ENCODE measurements at regions of chr11 and their contacts with region 1.

Region 1: DNA sequence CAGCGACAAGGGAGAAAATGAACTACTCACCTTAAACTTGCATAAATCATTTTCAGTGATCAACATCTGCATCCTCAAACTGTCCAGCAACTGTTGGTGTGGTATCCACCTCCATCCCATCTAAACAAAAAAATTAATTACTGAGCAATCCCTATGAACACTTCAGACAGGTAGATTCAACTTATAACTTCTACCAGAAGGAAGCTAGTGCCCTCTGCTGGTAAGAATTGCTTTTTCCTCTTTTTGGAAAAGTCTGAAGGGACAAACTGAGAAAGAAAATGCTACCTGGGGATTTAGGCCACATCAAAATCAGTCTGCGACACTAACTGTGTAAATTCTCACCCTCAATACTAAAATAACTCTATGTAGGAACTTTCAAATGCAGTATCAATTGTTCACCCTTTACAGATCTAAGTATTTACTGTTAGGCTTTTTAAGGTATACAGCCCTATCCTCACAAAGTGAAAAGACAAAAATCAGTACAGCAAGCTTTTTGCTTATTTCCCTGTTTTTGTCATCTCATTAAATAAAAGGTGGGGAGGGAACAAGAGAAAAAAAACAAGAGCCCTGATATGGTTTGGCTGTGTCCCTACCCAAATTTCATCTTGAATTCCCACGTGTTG is 17.9 kb downstream of the CLNS1A start:
- DNase-seq: peak; percentile 28
- ATAC-seq: peak; percentile 66
- H3K4me3 ChIP-seq: no peak overlapping the region
- H3K27ac ChIP-seq: no peak overlapping the region
- H3K4me1 ChIP-seq: no peaks in the 10 kb centered on the region
- H3K27me3 ChIP-seq: no peaks in the 10 kb centered on the region
- CTCF ChIP-seq: peak; percentile 66 to 77 (median 67); a peak in 5 of 6 replicates
- EP300 ChIP-seq: no peak
- POLR2A ChIP-seq: no peak
- RAD21 ChIP-seq: peak; percentile 76

Region 2: DNA sequence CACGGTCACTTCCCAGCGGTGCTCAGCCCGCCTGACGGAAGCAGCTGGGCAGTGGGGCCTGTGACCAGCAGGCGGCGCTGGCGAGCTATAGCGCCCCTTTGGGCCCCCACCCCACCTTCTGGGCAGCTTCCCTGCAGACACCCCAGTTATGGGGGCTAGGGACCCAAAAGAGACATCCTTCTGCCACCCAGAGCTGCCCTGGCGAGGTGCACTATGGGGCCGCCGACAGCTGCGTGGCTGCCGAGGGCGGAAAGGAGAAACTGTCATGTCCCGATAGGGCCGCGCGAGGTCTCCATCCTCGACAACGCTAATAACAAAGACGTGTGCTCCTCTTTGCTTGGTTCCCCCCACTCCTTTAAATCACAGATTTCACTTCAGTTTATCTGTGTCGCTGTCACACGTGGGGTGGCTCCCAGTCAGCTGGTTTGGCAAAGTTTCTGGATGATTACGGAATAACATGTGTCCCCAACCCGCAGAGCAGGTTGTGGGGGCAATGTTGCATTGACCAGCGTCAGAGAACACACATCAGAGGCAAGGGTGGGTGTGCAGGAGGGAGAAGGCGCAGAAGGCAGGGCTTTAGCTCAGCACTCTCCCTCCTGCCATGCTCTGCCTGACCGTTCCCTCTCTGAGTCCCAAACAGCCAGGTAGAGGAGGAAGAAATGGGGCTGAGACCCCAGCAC is 492.3 kb before region 1 on chr11:
- CTCF ChIA-PET with region 1: interaction called, 20 read pairs
- POLR2A ChIA-PET with region 1: no interaction called
- RAD21 ChIA-PET with region 1: no interaction called
- SMC1A ChIA-PET with region 1: interaction called, 6 read pairs
- in situ Hi-C with region 1: no loop called
- intact Hi-C with region 1: loop called (anchors 1 kb)
- DNase-seq: no peak
- ATAC-seq: peak; percentile 88
- H3K4me3 ChIP-seq: no peak overlapping the region
- H3K27ac ChIP-seq: no peak overlapping the region
- H3K4me1 ChIP-seq: 0 out of 2 replicates have a peak, but pooled peaks cover 3% of the 10 kb centered on the region
- H3K27me3 ChIP-seq: peaks cover 0 to 3% of the 10 kb centered on the region in 2 experiments; a peak in 2 of 4 replicates
- CTCF ChIP-seq: peak; percentile 84 to 99 (median 98)
- EP300 ChIP-seq: no peak
- POLR2A ChIP-seq: no peak
- RAD21 ChIP-seq: peak; percentile 59

Region 3: DNA sequence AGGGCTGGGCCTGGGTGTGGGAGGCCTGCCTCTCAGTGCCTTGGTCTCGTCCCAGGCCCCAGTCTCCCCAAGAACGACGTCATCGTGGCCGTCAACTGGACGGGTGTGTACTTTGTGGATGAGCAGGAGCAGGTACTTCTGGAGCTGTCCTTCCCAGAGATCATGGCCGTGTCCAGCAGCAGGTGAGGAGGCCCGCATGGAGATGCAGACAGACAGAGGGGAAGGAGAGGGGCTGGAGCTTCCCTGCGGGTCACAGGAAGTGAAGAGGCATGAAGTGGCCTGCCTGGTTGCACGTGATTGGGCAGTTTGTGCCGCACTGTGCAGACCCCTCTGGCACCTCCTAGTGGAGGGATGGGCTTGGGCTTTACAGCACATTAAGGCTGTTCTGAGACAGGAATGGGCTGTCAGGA is 421.2 kb before region 1 on chr11:
- CTCF ChIA-PET with region 1: interaction called, 8 read pairs
- POLR2A ChIA-PET with region 1: no interaction called
- RAD21 ChIA-PET with region 1: interaction called, 5 read pairs
- SMC1A ChIA-PET with region 1: interaction called, 4 read pairs
- in situ Hi-C with region 1: no loop called
- intact Hi-C with region 1: loop called (anchors 2 kb)
- DNase-seq: no peak
- ATAC-seq: peak; percentile 83
- H3K4me3 ChIP-seq: no peak overlapping the region
- H3K27ac ChIP-seq: no peak overlapping the region
- H3K4me1 ChIP-seq: no peaks in the 10 kb centered on the region
- H3K27me3 ChIP-seq: no peaks in the 10 kb centered on the region
- CTCF ChIP-seq: peak in 2 of 3 experiments; percentile 45 to 51; a peak in 3 of 6 replicates
- EP300 ChIP-seq: no peak
- POLR2A ChIP-seq: no peak
- RAD21 ChIP-seq: no peak

Region 4: GRCh38 chr11:77381729-77382685 is 237.7 kb before region 1 on chr11:
- CTCF ChIA-PET with region 1: no interaction called
- POLR2A ChIA-PET with region 1: no interaction called
- RAD21 ChIA-PET with region 1: no interaction called
- SMC1A ChIA-PET with region 1: no interaction called
- in situ Hi-C with region 1: no loop called
- intact Hi-C with region 1: loop called (anchors 10 kb)
- DNase-seq: no peak
- ATAC-seq: no peak; the same call in 2 of the 3 replicates
- H3K4me3 ChIP-seq: no peak overlapping the region
- H3K27ac ChIP-seq: no peak overlapping the region
- H3K4me1 ChIP-seq: no peaks in the 10 kb centered on the region
- H3K27me3 ChIP-seq: no peaks in the 10 kb centered on the region
- CTCF ChIP-seq: no peak
- EP300 ChIP-seq: no peak
- POLR2A ChIP-seq: no peak
- RAD21 ChIP-seq: no peak

Region 5: GRCh38 chr11:77435972-77436371 is 183.7 kb before region 1 on chr11:
- CTCF ChIA-PET with region 1: no interaction called
- POLR2A ChIA-PET with region 1: no interaction called
- RAD21 ChIA-PET with region 1: no interaction called
- SMC1A ChIA-PET with region 1: no interaction called
- in situ Hi-C with region 1: no loop called
- intact Hi-C with region 1: no loop called
- DNase-seq: no peak
- ATAC-seq: peak; percentile 55
- H3K4me3 ChIP-seq: peak overlapping the region; percentile 50; the same call in 1 of the 2 replicates
- H3K27ac ChIP-seq: peak overlapping the region; percentile 35; the same call in 1 of the 2 replicates
- H3K4me1 ChIP-seq: peaks cover 33% of the 10 kb centered on the region; the same call in 1 of the 2 replicates
- H3K27me3 ChIP-seq: no peaks in the 10 kb centered on the region
- CTCF ChIP-seq: no peak
- EP300 ChIP-seq: no peak
- POLR2A ChIP-seq: no peak
- RAD21 ChIP-seq: no peak

Region 6: GRCh38 chr11:77592727-77593126 is 27.0 kb before region 1 on chr11:
- CTCF ChIA-PET with region 1: interaction called, 14 read pairs
- POLR2A ChIA-PET with region 1: interaction called, 3 read pairs
- RAD21 ChIA-PET with region 1: no interaction called
- SMC1A ChIA-PET with region 1: interaction called, 5 read pairs
- in situ Hi-C with region 1: no loop called
- intact Hi-C with region 1: no loop called
- DNase-seq: no peak
- ATAC-seq: no peak
- H3K4me3 ChIP-seq: no peak overlapping the region
- H3K27ac ChIP-seq: no peak overlapping the region
- H3K4me1 ChIP-seq: peaks cover 6% of the 10 kb centered on the region; the same call in 1 of the 2 replicates
- H3K27me3 ChIP-seq: no peaks in the 10 kb centered on the region
- CTCF ChIP-seq: no peak
- EP300 ChIP-seq: no peak
- POLR2A ChIP-seq: no peak
- RAD21 ChIP-seq: no peak

Region 7: DNA sequence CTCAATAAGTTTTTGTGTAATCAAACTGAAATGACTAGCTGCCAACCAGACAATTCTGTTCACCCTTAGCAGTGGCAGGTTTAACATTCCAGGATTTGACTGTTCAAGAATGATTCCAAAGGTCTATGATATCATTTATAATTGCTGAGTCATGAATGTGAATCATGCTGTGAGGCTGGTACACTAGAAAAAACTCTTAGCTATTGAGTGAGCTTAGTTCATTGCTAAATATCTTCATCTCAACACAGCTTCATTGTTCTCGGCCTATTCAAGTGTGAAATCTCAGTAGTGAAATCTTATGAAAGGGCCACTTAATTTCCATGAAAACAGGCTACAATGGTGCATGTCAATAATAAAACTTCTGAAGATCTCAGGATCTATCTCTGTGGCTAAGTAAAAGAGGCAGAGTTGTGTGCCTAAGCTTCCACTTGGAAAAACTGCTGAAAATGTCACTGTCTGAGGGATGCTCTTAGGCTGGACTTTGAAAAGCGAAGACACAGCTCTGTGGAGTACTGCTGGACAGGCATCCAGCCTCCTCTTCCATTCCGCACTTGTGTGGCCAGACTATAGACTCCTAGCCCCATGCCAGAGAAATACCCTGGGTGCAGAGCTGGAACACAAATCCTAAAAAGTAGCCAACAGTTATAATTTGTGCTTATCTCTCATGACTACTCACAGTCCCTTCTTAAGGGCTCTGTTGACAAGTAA is 17.2 kb before region 1 on chr11:
- CTCF ChIA-PET with region 1: interaction called, 18 read pairs
- POLR2A ChIA-PET with region 1: no interaction called
- RAD21 ChIA-PET with region 1: no interaction called
- SMC1A ChIA-PET with region 1: interaction called, 13 read pairs
- in situ Hi-C with region 1: no loop called
- intact Hi-C with region 1: no loop called
- DNase-seq: no peak
- ATAC-seq: peak; percentile 54
- H3K4me3 ChIP-seq: no peak overlapping the region
- H3K27ac ChIP-seq: no peak overlapping the region
- H3K4me1 ChIP-seq: no peaks in the 10 kb centered on the region
- H3K27me3 ChIP-seq: no peaks in the 10 kb centered on the region
- CTCF ChIP-seq: no peak
- EP300 ChIP-seq: no peak
- POLR2A ChIP-seq: no peak
- RAD21 ChIP-seq: no peak

Region 8: DNA sequence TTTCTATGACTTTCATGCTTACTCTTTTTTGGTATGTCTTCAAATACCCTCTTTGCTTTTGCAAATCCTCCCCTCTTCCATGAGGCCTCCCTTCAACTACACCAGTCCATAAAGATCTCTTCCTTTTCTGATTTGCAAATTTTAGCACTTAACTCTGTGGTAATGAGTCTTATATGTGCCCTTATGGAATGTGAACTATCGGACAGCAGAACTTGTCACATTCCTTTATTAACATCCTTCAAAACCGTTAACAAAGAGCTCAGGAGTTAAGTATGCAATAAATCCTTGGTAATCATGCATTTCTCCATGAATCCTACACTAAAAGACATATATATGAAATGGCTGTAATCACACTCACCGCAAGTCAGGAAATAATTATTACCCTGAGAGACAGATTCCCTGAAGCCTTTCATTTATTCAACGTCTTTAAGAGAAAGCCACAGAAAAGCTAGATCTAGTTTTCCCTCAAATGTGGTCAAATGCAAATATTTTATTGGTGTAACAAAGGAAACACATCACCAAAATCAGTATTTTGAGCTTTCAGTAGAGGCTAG is 10.5 kb after region 1 on chr11:
- CTCF ChIA-PET with region 1: interaction called, 22 read pairs
- POLR2A ChIA-PET with region 1: interaction called, 3 read pairs
- RAD21 ChIA-PET with region 1: no interaction called
- SMC1A ChIA-PET with region 1: interaction called, 4 read pairs
- in situ Hi-C with region 1: no loop called
- intact Hi-C with region 1: no loop called
- DNase-seq: no peak
- ATAC-seq: no peak
- H3K4me3 ChIP-seq: no peak overlapping the region
- H3K27ac ChIP-seq: peak overlapping the region; percentile 50
- H3K4me1 ChIP-seq: peaks cover 4% of the 10 kb centered on the region; the same call in 1 of the 2 replicates
- H3K27me3 ChIP-seq: no peaks in the 10 kb centered on the region
- CTCF ChIP-seq: no peak
- EP300 ChIP-seq: no peak
- POLR2A ChIP-seq: no peak
- RAD21 ChIP-seq: no peak

Region 9: DNA sequence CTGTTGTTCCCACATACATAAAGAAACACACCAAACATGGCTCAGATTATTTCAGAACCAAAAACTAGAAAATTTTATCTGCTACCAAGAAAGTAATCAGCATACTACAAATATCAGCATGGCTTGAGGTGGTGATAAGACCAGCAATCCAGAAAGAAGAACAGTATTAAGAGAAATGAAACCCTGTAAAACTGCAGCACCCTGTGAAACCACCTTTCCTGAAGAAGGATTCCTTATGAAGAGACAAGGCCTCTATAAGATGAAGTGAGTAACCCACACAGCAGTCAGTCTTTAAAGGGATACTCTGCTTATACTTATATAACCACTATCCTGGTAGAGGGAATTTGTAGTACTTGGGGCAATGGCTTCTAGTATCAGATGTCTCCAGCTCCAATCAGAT is 150.9 kb after region 1 on chr11:
- CTCF ChIA-PET with region 1: no interaction called
- POLR2A ChIA-PET with region 1: no interaction called
- RAD21 ChIA-PET with region 1: no interaction called
- SMC1A ChIA-PET with region 1: no interaction called
- in situ Hi-C with region 1: no loop called
- intact Hi-C with region 1: no loop called
- DNase-seq: no peak
- ATAC-seq: no peak
- H3K4me3 ChIP-seq: no peak overlapping the region
- H3K27ac ChIP-seq: no peak overlapping the region
- H3K4me1 ChIP-seq: no peaks in the 10 kb centered on the region
- H3K27me3 ChIP-seq: no peaks in the 10 kb centered on the region
- CTCF ChIP-seq: no peak
- EP300 ChIP-seq: no peak
- POLR2A ChIP-seq: no peak
- RAD21 ChIP-seq: no peak

Measured in GM12878 (cell line).